ENCODE measurements at regions of chr21 and their contacts with region 1.

Region 1: GRCh38 chr21:34510148-34511142 is 1.6 kb downstream of the KCNE1 start:
- DNase-seq: peak; percentile 75
- ATAC-seq: peak; percentile 95
- H3K4me3 ChIP-seq: no peak overlapping the region
- H3K27ac ChIP-seq: no peak overlapping the region
- H3K4me1 ChIP-seq: no peaks in the 10 kb centered on the region
- H3K27me3 ChIP-seq: no peaks in the 10 kb centered on the region
- CTCF ChIP-seq: peak; percentile 87

Region 2: DNA sequence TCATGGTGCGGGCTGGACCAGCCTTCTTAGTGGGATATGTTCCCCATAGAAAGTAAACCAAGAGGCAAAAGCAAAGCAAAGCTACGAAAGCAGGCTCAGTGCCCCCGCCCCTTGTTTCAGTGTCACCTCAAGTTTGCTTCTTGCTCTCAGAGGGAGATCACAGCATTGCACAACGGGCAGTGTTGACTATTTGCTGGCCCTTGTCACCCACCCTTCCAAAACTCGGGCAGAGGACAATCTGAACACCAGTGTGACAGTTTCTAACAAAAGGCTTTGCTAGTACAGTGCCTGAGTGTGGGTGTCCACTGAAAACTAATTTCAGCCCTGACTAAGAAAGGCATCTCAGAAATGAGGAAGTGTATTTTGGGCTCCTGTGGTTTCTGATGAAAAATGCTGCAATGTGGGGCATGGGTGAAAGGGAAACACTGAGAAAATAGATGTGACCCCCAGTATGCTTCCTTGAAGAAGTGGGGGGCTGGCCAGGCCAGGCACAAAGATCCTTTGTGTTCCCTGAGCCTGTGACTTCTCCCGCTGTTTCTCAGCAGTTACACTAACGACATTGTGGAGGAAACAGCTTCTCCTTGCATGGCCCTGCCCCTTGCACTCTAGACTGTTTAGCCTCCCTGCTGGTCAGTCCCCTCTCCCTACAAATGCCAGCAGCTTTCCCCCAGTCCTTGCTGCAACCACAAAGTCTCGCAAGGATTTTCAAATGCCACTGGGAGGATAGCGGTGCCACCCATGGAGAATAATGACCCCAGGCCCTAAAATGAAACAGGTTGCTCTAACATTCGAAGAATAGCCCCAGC is 34.8 kb after region 1 on chr21:
- CTCF ChIA-PET with region 1: no interaction called
- POLR2A ChIA-PET with region 1: no interaction called
- intact Hi-C with region 1: no loop called
- DNase-seq: peak; percentile 65
- ATAC-seq: peak; percentile 67
- H3K4me3 ChIP-seq: no peak overlapping the region
- H3K27ac ChIP-seq: peak overlapping the region; percentile 53
- H3K4me1 ChIP-seq: peaks cover 26% of the 10 kb centered on the region
- H3K27me3 ChIP-seq: no peaks in the 10 kb centered on the region
- CTCF ChIP-seq: no peak

Region 3: DNA sequence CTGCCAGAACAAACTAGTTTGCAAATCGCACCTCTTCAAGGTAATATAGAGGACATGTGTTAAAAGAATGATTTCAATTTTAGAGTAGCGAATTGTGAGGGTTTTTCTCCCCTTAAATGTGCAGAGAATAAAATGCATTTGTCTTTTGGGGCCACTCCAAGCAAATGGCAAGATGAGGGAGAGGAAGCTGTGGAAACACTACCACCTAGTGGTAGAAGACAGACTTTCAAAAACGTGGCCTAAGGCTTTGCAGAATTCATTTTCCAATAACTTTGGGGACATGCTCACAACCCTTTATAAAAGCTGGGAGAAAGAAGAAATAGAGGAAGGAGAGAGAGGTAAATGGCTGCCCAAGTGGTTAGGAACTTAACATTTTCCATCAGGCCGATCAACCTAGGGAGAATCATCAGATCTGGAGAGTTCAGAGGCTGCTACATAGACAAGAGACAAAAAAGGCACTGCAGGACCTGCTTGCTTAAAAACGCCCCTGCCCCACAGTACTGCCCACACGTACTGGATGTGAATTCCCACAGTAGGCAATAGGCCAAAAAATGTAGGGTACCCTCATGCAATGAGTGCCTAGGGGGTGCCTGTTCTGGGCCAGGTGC is 120.2 kb after region 1 on chr21:
- CTCF ChIA-PET with region 1: interaction called, 5 read pairs
- POLR2A ChIA-PET with region 1: no interaction called
- intact Hi-C with region 1: loop called (anchors 1 kb)
- DNase-seq: peak; percentile 74
- ATAC-seq: peak; percentile 80
- H3K4me3 ChIP-seq: no peak overlapping the region
- H3K27ac ChIP-seq: no peak overlapping the region
- H3K4me1 ChIP-seq: no peaks in the 10 kb centered on the region
- H3K27me3 ChIP-seq: peaks cover 6% of the 10 kb centered on the region; the same call in 1 of the 2 replicates
- CTCF ChIP-seq: peak; percentile 91